Spleen (tissue), 13 donors: ENCODE measurements at regions of chr1 and their contacts with region 1.

Region 1: DNA sequence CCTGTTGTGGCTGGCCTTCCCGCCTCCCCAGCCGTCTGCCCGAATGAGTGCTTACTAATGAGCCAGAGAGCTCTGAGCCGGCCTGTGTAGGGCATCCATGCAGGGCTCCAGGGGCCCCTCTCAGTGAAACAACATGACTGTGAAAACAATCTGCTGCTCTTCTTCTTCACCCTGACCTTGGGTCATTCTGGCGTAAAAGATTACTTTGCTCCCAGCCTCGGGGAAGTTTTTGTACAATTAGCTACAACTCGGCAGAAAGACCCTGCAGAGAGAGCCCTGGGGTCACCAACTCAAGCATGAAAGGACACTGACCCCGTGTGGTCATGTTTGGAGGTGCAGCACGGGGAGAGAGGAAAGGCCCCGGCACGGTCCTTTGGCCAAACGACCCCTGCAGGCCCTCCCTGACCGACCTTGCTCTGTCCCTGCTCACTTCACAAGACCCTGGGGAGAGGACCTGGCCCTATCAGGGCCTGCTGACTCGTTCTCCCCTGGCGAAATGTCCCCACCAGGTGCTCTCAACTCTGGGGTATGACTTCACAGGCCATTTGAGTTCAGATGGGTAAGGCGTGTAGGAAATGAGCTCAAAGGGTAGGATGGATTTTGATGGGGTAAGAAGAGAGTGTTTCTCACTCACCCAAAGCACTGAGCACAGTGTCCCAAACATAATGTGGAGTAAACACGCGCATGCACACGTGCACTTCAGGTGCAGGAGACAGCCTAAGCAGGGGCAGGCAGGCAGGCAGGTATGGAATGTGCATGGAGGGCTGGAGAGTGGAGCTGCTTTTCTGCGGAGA is 22.9 kb upstream of the FAM20B start:
- DNase-seq: peak; percentile 88
- H3K4me3 ChIP-seq: peak overlapping the region in 1 of 8 donors; percentile 22
- H3K27ac ChIP-seq: no peak overlapping the region
- H3K4me1 ChIP-seq: peaks cover 0 to 23% (median 8%) of the 10 kb centered on the region in 6 donors
- H3K27me3 ChIP-seq: no peaks in the 10 kb centered on the region
- CTCF ChIP-seq: peak; percentile 91 to 98 (median 96)
- POLR2A ChIP-seq: no peak

Region 2: GRCh38 chr1:178532392-178532791 is 470.4 kb before region 1 on chr1:
- intact Hi-C with region 1: loop called (anchors 5 kb)
- DNase-seq: peak; percentile 93
- H3K4me3 ChIP-seq: peak overlapping the region in 1 of 8 donors; percentile 13
- H3K27ac ChIP-seq: no peak overlapping the region
- H3K4me1 ChIP-seq: peaks cover 0 to 10% (median 8%) of the 10 kb centered on the region in 6 donors
- H3K27me3 ChIP-seq: peaks cover 0 to 5% (median 0%) of the 10 kb centered on the region in 7 donors
- CTCF ChIP-seq: peak; percentile 71 to 92 (median 85)
- POLR2A ChIP-seq: no peak

Region 3: GRCh38 chr1:178542560-178543356 is 460.0 kb before region 1 on chr1:
- intact Hi-C with region 1: loop called (anchors 5 kb)
- DNase-seq: peak; percentile 97
- H3K4me3 ChIP-seq: peak overlapping the region; percentile 69 to 90 (median 76)
- H3K27ac ChIP-seq: peak overlapping the region; percentile 64 to 91 (median 84)
- H3K4me1 ChIP-seq: peaks cover 2 to 53% (median 32%) of the 10 kb centered on the region in 6 donors
- H3K27me3 ChIP-seq: no peaks in the 10 kb centered on the region
- CTCF ChIP-seq: peak; percentile 95 to 99 (median 98)
- POLR2A ChIP-seq: no peak

Region 4: DNA sequence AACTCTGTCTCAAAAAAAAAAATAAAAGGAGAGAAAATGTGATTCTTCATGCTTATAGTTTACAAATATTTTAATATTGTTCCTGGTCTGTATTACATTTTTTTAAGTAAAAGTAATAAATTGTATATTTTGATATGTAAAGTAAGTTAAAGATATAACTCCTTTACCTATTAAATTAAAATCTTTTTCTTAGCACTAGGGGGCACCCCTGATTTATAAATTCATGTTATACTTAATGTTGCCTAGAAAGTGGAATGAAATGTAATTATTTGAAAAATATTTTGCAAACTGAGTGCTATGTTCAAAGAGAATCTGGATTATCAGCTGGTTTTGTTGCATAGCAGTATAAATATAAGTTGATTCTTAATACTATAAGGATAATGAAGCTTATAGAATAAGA is 228.5 kb before region 1 on chr1:
- intact Hi-C with region 1: loop called (anchors 5 kb)
- DNase-seq: no peak
- H3K4me3 ChIP-seq: no peak overlapping the region
- H3K27ac ChIP-seq: no peak overlapping the region
- H3K4me1 ChIP-seq: peaks cover 0 to 38% (median 2%) of the 10 kb centered on the region in 6 donors
- H3K27me3 ChIP-seq: no peaks in the 10 kb centered on the region
- CTCF ChIP-seq: peak in 5 of 11 experiments; percentile 29 to 48 (median 34)
- POLR2A ChIP-seq: no peak

Region 5: DNA sequence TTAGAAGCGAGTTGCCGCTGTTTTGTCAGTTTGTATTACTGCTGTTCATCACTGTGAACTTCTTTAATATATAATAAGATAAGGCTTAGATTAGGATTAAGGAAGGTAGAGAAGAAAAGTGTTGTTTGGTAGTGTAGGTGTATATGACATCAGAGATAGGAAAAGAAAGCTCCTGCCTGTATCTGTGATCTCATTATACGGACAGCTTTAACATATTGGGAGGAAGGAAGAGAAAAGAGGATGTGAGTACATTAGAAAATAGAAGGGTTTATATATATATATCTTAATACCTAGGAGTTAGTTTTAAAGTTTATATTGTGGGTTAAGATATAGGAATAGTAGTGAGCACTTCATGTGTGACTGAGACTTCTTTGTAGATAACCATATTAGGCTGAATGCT is 206.7 kb before region 1 on chr1:
- intact Hi-C with region 1: no loop called
- DNase-seq: no peak
- H3K4me3 ChIP-seq: no peak overlapping the region
- H3K27ac ChIP-seq: peak overlapping the region in 3 of 8 donors; percentile 17 to 43 (median 19)
- H3K4me1 ChIP-seq: peaks cover 0 to 29% (median 6%) of the 10 kb centered on the region in 6 donors
- H3K27me3 ChIP-seq: no peaks in the 10 kb centered on the region
- CTCF ChIP-seq: no peak
- POLR2A ChIP-seq: no peak